ENCODE measurements at regions of chr6 and their contacts with region 1.

Region 1: DNA sequence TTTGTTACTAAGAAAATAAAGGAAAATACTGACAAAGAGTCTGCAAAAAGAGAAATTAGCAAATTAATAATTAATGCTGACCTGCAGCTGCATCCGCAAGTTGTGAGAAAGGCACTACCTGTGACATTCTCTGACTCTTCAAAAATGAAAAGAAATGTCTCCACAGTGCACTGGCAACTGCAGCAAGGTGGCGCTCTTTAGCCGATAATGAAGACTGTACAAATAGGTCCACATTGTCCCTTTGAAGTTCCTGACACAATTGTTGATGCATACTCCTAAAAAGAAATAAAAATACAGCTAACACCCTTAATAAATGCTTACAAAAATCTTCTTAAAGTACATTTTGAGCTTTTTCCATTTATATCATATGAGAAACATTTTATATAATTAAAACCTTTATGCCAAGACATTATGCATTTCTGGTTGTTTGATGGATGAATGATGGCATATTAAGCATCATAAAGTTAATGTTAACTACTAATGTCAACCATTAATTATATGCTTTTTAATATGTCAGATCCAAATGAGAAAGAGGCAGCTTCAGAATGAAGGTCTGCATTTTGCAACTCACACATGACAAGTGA is 96.5 kb downstream of the MMS22L start:
- DNase-seq: peak; percentile 55
- H3K4me3 ChIP-seq: no peak overlapping the region
- CTCF ChIP-seq: peak; percentile 89

Region 2: GRCh38 chr6:97246842-97247241 is 60.3 kb after region 1 on chr6:
- in situ Hi-C with region 1: no loop called
- DNase-seq: no peak
- H3K4me3 ChIP-seq: no peak overlapping the region
- CTCF ChIP-seq: no peak

Region 3: GRCh38 chr6:97294451-97294850 is 107.9 kb after region 1 on chr6:
- in situ Hi-C with region 1: loop called (anchors 5 kb)
- DNase-seq: peak; percentile 44
- H3K4me3 ChIP-seq: no peak overlapping the region
- CTCF ChIP-seq: no peak

Measured in astrocyte of the cerebellum (primary cell).